Testis (tissue), 5 donors: ENCODE measurements at regions of chr1 and their contacts with region 1.

Region 1: GRCh38 chr1:192609110-192610079 is 26.6 kb upstream of the RGS13 start:
- DNase-seq: peak; percentile 61
- H3K4me3 ChIP-seq: no peak overlapping the region
- H3K27ac ChIP-seq: no peak overlapping the region
- H3K4me1 ChIP-seq: no peaks in the 10 kb centered on the region
- H3K27me3 ChIP-seq: no peaks in the 10 kb centered on the region
- CTCF ChIP-seq: no peak
- POLR2A ChIP-seq: no peak

Region 2: GRCh38 chr1:192477630-192478029 is 131.8 kb before region 1 on chr1:
- intact Hi-C with region 1: loop called (anchors 10 kb)
- DNase-seq: no peak
- H3K4me3 ChIP-seq: no peak overlapping the region
- H3K27ac ChIP-seq: no peak overlapping the region
- H3K4me1 ChIP-seq: no peaks in the 10 kb centered on the region
- H3K27me3 ChIP-seq: no peaks in the 10 kb centered on the region
- CTCF ChIP-seq: peak; percentile 13 to 45 (median 43)
- POLR2A ChIP-seq: no peak

Region 3: GRCh38 chr1:193234530-193234929 is 625.1 kb after region 1 on chr1:
- intact Hi-C with region 1: no loop called
- DNase-seq: no peak
- H3K4me3 ChIP-seq: no peak overlapping the region
- H3K27ac ChIP-seq: no peak overlapping the region
- H3K4me1 ChIP-seq: no peaks in the 10 kb centered on the region
- H3K27me3 ChIP-seq: no peaks in the 10 kb centered on the region
- CTCF ChIP-seq: no peak
- POLR2A ChIP-seq: no peak

Region 4: GRCh38 chr1:193338194-193338593 is 728.8 kb after region 1 on chr1:
- intact Hi-C with region 1: no loop called
- DNase-seq: no peak
- H3K4me3 ChIP-seq: no peak overlapping the region
- H3K27ac ChIP-seq: no peak overlapping the region
- H3K4me1 ChIP-seq: no peaks in the 10 kb centered on the region
- H3K27me3 ChIP-seq: no peaks in the 10 kb centered on the region
- CTCF ChIP-seq: no peak
- POLR2A ChIP-seq: no peak